Psoas muscle (tissue), 8 donors: ENCODE measurements at regions of chr7 and their contacts with region 1.

Region 1: GRCh38 chr7:107594961-107595737 is 15.1 kb downstream of the BCAP29 start:
- DNase-seq: no peak
- ATAC-seq: peak; percentile 61 to 83 (median 74)
- H3K4me3 ChIP-seq: no peak overlapping the region
- H3K27ac ChIP-seq: peak overlapping the region; percentile 71
- H3K4me1 ChIP-seq: peaks cover 16% of the 10 kb centered on the region
- H3K27me3 ChIP-seq: no peaks in the 10 kb centered on the region
- CTCF ChIP-seq: no peak

Region 2: DNA sequence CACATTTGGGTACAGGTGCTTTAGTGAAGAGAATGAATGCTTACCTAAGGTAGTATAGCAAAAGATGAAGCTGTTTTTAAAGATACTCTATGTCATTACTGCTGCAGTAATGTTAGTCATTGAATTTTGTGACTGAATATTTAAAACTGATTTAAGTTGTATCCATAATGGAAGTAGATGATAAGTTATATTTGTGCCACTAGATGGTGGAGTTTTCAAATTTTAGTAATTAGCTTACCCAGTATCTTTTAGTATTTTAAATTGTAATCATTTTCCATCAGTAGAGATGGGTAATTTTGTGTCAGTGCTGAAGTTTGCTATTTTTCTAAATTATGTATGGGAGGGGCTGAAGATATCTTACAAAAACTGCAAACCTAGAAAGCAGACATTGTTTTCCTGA is 401.1 kb before region 1 on chr7:
- intact Hi-C with region 1: loop called in 1 of 2 experiments (anchors 10 kb)
- DNase-seq: no peak
- ATAC-seq: no peak
- H3K4me3 ChIP-seq: no peak overlapping the region
- H3K27ac ChIP-seq: no peak overlapping the region
- H3K4me1 ChIP-seq: no peaks in the 10 kb centered on the region
- H3K27me3 ChIP-seq: no peaks in the 10 kb centered on the region
- CTCF ChIP-seq: no peak